Right ventricle myocardium inferior (tissue), 1 donor: ENCODE measurements at regions of chr1 and their contacts with region 1.

Region 1: GRCh38 chr1:96721416-96722160 is at the start of gene PTBP2:
- DNase-seq: peak; percentile 92
- ATAC-seq: peak; percentile 96
- total RNA-seq, gene PTBP2: 11.2 TPM

Region 2: DNA sequence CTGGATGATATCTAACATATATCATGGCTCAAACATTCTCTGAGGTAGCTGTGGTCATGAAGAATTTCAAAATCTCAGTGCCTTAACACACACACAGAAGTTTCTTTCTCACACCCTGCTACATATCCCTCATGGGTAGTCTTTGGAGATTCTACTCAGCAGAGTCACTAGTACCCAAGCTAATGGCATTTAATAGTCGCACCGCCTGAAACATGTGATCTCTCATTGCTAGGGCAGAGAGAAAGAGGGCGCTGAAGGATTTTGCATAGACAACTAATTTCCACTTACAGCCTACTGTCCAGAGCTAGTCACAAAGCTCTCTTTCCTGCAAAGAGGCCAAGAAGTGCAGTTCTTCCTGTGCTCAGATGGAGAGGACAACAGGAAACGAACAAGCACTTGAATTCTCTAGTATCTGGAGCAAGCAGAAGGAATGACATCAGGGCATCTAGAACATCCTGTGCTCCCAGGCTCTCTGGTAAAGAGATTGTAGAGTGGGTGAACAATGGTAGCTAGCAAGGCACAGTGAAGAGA is 183.4 kb before region 1 on chr1:
- intact Hi-C with region 1: loop called (anchors 10 kb)
- DNase-seq: no peak
- ATAC-seq: peak; percentile 96